PC-9 (cell line): ENCODE measurements at regions of chr3 and their contacts with region 1.

Region 1: DNA sequence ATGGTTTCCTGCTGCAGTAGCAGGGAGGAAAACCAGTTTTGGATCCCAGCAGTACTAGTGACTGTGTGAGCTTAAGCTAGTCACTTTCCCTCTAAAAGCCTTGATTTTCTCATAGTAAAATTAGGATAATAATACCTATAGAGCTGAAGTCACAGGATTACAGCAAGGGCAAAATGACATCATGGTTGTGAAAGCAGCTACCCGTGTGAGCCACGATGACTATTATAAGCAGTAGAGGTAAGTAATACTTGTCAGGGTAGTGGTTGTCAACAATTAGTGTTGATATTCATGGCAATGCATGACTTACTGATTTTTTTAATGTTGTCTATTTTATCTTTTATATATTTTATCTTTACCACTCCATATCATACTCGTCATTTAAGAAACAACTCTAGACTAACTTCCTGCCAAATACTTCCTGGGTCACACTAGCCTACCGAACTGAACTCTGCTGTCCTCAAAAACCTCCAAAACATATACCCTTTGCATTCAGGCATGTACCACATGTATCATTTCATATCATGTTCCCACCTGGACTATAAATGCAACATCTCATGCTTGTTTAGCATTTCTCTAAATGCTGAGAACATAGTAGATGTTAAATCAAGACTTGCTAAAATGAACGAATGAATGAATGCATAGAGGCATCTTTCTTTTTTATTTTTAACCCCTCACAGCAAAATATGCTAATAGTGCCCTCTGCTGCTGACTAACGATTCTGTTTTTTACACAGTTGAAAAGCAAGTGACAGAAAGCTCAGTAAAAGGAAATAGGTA is 172.6 kb downstream of the P3H2 start:
- DNase-seq: peak; percentile 40 to 56
- H3K4me3 ChIP-seq: no peak overlapping the region
- H3K27ac ChIP-seq: peak overlapping the region; percentile 39
- H3K4me1 ChIP-seq: peaks cover 42% of the 10 kb centered on the region
- H3K27me3 ChIP-seq: no peaks in the 10 kb centered on the region
- CTCF ChIP-seq: peak; percentile 94

Region 2: DNA sequence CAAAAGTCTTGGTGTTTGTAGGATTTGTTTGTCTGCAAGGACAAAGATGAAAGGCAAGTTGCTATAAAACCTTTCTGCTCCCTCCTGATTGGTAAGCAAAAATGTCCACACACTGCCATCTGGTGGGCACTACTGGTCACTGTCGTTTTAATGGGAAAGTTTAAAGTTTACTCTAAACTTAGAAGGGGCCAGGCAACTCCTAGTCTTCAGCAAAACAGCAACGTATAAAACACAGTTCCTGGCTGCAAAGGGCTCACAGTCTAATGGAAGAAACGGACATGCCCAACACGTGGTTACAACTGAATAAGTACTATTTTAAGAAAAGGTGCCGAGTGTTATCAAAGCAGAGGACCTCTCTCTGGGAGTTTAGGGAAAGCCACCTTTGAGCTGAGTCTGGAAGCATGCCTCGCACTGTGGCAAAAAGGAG is 800.0 kb before region 1 on chr3:
- CTCF ChIA-PET with region 1: interaction called, 3 read pairs
- POLR2A ChIA-PET with region 1: no interaction called
- intact Hi-C with region 1: loop called (anchors 5 kb)
- DNase-seq: peak; percentile 59
- H3K4me3 ChIP-seq: no peak overlapping the region
- H3K27ac ChIP-seq: no peak overlapping the region
- H3K4me1 ChIP-seq: peaks cover 7% of the 10 kb centered on the region
- H3K27me3 ChIP-seq: no peaks in the 10 kb centered on the region
- CTCF ChIP-seq: peak; percentile 97

Region 3: DNA sequence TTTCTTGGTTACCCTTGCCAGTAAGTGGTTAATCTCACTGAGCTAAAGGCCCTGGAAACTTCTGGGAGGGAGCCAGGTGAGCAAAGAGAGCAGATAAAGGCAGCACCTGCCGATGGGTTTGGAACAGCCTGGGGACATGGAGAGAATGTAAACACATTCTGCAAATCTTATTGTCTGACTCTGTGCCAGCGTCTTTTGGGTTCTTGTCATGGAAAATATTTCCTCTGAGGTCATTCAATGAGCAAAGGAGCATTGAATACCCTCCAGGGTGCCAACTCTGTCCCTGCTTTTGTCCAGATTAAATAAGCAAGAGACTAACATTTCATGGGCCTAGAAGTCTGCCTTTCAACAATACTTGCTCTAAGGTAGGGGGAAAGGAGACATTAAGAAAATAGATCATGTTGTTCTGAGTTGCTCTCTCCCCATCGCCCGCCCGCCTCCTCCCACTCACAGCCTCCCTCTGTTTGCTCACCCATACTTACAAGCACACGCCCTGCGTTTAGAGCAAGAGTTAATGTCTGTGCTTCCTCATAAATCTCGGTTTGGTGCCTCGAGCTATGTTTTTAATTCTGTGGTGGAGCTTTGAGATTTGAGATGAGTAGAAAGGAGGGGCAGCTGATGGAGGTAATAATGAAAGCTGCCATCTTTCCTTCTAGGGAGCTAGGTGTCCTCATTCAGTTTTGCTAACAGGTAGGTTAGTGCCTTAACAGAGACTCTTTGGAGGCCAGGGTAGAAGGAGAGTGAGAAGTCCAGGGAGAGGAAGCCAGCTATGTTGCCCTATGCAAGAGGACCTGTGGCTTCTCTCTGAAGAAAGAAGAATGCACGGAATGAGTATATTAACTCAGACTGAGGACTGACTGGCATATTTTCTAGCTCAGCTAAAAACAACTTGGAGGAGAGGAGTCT is 643.4 kb before region 1 on chr3:
- CTCF ChIA-PET with region 1: interaction called, 3 read pairs
- POLR2A ChIA-PET with region 1: interaction called, 6 read pairs
- intact Hi-C with region 1: loop called (anchors 1 kb)
- DNase-seq: peak; percentile 93 to 99
- H3K4me3 ChIP-seq: peak overlapping the region; percentile 27; the same call in 1 of the 2 replicates
- H3K27ac ChIP-seq: peak overlapping the region; percentile 85
- H3K4me1 ChIP-seq: peaks cover 44% of the 10 kb centered on the region
- H3K27me3 ChIP-seq: no peaks in the 10 kb centered on the region
- CTCF ChIP-seq: no peak

Region 4: DNA sequence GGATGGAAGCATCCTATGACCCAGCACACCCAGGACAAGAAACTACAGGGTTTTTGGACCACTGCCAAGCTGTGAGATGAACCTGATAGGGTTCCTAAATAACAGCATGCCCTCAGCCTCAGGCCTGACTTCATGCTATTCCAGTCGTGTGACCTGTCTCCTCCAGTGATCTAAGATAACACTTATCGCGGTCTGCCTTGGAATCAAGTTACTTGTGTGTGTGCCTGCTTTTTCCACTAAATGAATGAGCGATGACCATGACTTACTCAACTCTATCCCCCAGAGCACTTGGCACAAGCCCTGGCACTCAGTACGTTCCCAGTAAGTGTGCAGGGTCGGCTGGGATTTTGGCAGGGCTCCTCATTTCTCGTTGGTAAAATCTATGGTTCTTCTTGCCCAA is 489.6 kb before region 1 on chr3:
- CTCF ChIA-PET with region 1: no interaction called
- POLR2A ChIA-PET with region 1: interaction called, 10 read pairs
- intact Hi-C with region 1: loop called (anchors 1 kb)
- DNase-seq: peak; percentile 84 to 86
- H3K4me3 ChIP-seq: no peak overlapping the region
- H3K27ac ChIP-seq: no peak overlapping the region
- H3K4me1 ChIP-seq: peaks cover 11% of the 10 kb centered on the region
- H3K27me3 ChIP-seq: no peaks in the 10 kb centered on the region
- CTCF ChIP-seq: no peak

Region 5: GRCh38 chr3:189710620-189711402 is 237.3 kb before region 1 on chr3:
- CTCF ChIA-PET with region 1: interaction called, 4 read pairs
- POLR2A ChIA-PET with region 1: no interaction called
- intact Hi-C with region 1: loop called (anchors 2 kb)
- DNase-seq: peak; percentile 65 to 68
- H3K4me3 ChIP-seq: no peak overlapping the region
- H3K27ac ChIP-seq: peak overlapping the region; percentile 16; the same call in 1 of the 2 replicates
- H3K4me1 ChIP-seq: peaks cover 24% of the 10 kb centered on the region
- H3K27me3 ChIP-seq: no peaks in the 10 kb centered on the region
- CTCF ChIP-seq: no peak

Region 6: DNA sequence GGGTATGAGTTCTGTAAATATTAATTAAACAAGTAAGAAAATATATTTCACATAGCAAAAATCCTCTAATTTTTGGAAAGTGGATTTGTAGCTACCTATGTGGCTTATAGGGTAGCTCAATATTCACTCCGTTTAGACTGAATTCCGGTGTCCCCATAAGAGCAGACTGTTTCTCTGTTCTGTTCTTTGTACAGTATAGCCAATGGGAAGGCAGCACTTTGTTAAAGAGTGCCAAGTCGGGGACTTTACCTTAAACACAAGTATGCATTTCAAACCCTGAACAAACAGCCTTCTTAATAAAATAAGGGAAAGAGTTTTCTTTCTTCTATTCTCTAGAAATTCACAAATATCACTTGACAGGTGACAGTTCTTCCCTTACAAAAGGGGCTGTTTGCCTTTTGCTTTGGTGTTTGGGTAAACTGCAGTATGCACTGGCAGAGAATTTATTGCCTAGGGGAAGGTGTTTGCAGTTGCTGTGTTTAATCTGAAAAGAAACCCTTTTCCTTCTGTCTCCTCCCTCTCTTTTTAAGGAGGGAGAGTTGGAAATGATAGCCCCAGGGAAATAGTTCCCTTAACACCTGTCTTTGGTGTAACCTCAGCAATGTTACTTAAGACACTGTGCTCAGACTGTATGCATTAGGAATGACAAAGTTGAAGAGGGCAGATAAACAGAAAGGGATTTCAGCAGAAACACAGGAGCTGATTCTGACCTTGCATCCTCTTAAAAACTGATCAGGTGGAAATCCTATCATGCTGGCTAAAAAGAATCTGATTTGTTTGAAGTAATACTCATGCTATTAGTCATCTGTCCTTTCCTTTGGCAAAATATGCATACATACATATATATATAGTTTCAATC is 191.7 kb before region 1 on chr3:
- CTCF ChIA-PET with region 1: interaction called, 5 read pairs
- POLR2A ChIA-PET with region 1: interaction called, 3 read pairs
- intact Hi-C with region 1: loop called (anchors 1 kb)
- DNase-seq: peak; percentile 58 to 100
- H3K4me3 ChIP-seq: no peak overlapping the region; the same call in 1 of the 2 replicates
- H3K27ac ChIP-seq: peak overlapping the region; percentile 93
- H3K4me1 ChIP-seq: peaks cover 40% of the 10 kb centered on the region
- H3K27me3 ChIP-seq: no peaks in the 10 kb centered on the region
- CTCF ChIP-seq: no peak

Region 7: GRCh38 chr3:189820365-189820720 is 127.8 kb before region 1 on chr3:
- CTCF ChIA-PET with region 1: no interaction called
- POLR2A ChIA-PET with region 1: no interaction called
- intact Hi-C with region 1: no loop called
- DNase-seq: no peak
- H3K4me3 ChIP-seq: no peak overlapping the region
- H3K27ac ChIP-seq: no peak overlapping the region
- H3K4me1 ChIP-seq: 0 out of 2 replicates have a peak, but pooled peaks cover 9% of the 10 kb centered on the region
- H3K27me3 ChIP-seq: no peaks in the 10 kb centered on the region
- CTCF ChIP-seq: no peak

Region 8: DNA sequence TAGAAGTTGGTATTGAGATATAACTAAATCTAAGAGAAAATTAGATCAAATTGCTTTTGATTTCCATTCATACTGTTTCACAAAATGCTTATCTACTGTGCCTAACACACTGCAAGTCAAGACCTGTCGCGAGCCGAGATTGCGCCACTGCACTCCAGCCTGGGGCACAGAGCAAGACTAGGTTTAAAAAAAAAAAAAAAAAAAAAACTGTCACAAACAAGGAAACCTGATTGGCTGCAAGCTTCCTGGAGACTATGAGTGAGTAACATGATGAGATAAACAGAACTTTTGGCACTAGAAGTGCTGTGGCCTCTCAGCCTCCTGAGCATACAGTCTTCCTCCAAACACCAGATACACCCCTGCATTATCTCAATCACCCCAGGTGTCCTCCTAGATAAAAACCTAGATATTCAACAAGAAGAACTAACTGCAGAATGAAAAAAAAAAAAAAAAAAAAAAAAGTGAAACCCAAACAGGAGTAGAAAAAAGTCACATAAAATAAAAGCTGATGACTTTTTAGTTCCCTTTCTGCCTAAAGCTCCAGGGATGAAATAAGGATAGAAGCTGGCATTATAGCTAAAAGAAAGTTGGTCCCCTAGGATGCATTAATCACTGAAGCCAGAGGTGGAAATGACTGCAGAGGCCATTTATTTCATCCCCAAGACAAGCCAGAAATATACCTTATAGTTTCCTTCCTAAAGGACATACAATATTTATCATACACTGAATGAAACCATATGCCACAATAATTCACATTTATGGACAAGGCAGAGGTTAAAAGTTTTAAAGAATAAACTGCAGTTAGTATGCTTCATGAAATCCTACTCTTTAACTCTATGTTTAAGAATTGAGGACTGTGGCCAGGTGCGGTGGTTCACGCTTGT is 90.2 kb after region 1 on chr3:
- CTCF ChIA-PET with region 1: interaction called, 10 read pairs
- POLR2A ChIA-PET with region 1: no interaction called
- intact Hi-C with region 1: no loop called
- DNase-seq: peak in 1 of 2 experiments; percentile 82
- H3K4me3 ChIP-seq: no peak overlapping the region
- H3K27ac ChIP-seq: no peak overlapping the region
- H3K4me1 ChIP-seq: no peaks in the 10 kb centered on the region
- H3K27me3 ChIP-seq: no peaks in the 10 kb centered on the region
- CTCF ChIP-seq: no peak

Region 9: GRCh38 chr3:190330936-190331734 is 383.0 kb after region 1 on chr3:
- CTCF ChIA-PET with region 1: no interaction called
- POLR2A ChIA-PET with region 1: no interaction called
- intact Hi-C with region 1: no loop called
- DNase-seq: no peak
- H3K4me3 ChIP-seq: no peak overlapping the region
- H3K27ac ChIP-seq: no peak overlapping the region
- H3K4me1 ChIP-seq: 0 out of 2 replicates have a peak, but pooled peaks cover 5% of the 10 kb centered on the region
- H3K27me3 ChIP-seq: no peaks in the 10 kb centered on the region
- CTCF ChIP-seq: no peak